ENCODE measurements at regions of chr5 and their contacts with region 1.

Region 1: GRCh38 chr5:132456296-132457001 is 34.1 kb downstream of the IRF1 start:
- DNase-seq: no peak
- H3K4me3 Mint-ChIP-seq: no peak overlapping the region
- H3K27ac Mint-ChIP-seq: peak overlapping the region; percentile 60
- H3K4me1 Mint-ChIP-seq: peaks cover 47% of the 10 kb centered on the region
- H3K27me3 Mint-ChIP-seq: no peaks in the 10 kb centered on the region
- CTCF ChIP-seq: no peak

Region 2: GRCh38 chr5:132362086-132362485 is 94.4 kb before region 1 on chr5:
- CTCF ChIA-PET with region 1: no interaction called
- POLR2A ChIA-PET with region 1: no interaction called
- intact Hi-C with region 1: no loop called
- DNase-seq: peak; percentile 82
- H3K4me3 Mint-ChIP-seq: peak overlapping the region; percentile 10
- H3K27ac Mint-ChIP-seq: peak overlapping the region; percentile 99
- H3K4me1 Mint-ChIP-seq: peaks cover 46% of the 10 kb centered on the region
- H3K27me3 Mint-ChIP-seq: no peaks in the 10 kb centered on the region
- CTCF ChIP-seq: no peak

Region 3: DNA sequence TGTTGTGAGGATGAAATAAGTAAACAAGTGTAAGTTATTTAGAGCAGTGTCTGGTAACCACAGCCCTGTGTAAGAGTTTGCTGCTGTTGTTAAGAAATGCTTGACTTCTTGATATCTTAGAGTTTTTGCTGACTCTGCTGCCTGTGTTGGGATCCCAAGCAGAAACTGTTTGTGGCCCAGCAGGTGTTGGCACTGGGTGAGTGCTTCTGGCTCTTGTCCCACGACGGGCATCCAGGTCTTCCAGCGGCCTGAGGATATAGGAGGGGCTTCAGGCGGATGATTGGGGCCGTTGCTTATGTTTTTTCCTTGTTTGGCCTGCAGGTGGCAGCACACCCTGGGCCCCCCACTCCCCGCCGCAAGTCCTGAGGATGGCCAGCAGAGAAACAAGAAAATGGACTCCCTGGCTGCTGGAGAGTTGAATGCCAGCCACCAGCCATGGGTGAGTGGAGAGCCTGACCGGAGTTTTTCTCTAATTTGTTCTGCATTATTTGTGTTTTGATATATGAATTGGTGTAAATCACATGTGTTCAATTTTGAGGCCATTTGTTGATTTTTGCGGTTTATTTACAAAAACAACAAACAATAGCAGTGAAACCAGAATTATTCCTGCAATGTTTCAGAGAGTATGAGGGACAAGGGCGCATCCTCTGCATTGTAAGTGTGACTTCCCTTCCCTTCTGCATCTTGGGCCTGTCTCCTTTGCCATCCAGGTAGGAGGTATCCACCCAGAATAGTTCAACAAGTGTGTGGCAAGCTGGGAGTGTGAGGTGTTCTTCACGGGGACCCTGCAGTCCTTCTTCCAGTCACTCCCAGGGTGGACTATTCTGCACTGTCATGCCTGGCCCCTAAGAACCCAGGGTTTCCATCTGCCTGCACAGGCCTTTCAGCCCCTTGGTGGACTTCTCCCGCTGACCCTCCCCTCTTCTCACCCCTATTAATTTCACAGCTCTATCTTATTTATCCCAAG is 36.7 kb before region 1 on chr5:
- CTCF ChIA-PET with region 1: interaction called, 3 read pairs
- POLR2A ChIA-PET with region 1: interaction called, 30 read pairs
- intact Hi-C with region 1: loop called (anchors 1 kb)
- DNase-seq: peak; percentile 87
- H3K4me3 Mint-ChIP-seq: no peak overlapping the region
- H3K27ac Mint-ChIP-seq: peak overlapping the region; percentile 17
- H3K4me1 Mint-ChIP-seq: peaks cover 35% of the 10 kb centered on the region
- H3K27me3 Mint-ChIP-seq: no peaks in the 10 kb centered on the region
- CTCF ChIP-seq: peak; percentile 97

Region 4: DNA sequence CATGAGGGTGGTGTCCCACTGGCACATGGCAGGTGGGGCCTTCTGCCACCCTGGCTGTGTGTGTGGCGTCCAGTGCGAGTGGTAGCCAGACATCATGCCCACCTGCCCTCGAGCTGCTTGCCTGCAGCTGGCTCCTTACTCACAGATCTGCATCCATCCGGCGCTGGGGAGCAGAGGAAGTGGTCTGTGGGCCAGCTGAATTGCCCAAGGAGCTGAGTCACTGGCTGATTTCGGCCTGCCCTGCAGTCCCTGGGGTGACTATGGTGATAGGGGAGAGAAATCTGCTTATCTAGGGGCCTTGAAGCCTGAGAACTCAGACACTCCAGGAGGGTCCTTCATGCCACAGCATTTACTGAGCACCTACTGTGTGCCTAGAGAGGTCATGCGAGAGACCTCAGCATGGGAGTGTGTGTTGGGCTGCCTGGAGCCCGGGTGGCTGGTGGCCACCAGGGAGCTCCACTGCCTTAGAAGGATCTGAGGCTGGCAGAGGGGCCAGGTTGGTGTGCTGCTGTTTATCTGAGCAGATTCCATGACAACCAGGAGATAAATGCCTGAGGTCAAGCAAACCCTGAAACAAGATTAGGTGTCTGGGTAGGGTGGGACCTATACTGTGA is 29.8 kb before region 1 on chr5:
- CTCF ChIA-PET with region 1: interaction called, 4 read pairs
- POLR2A ChIA-PET with region 1: interaction called, 30 read pairs
- intact Hi-C with region 1: no loop called
- DNase-seq: peak; percentile 96
- H3K4me3 Mint-ChIP-seq: no peak overlapping the region
- H3K27ac Mint-ChIP-seq: peak overlapping the region; percentile 68
- H3K4me1 Mint-ChIP-seq: peaks cover 47% of the 10 kb centered on the region
- H3K27me3 Mint-ChIP-seq: no peaks in the 10 kb centered on the region
- CTCF ChIP-seq: peak; percentile 22

Region 5: GRCh38 chr5:132437604-132438266 is 18.7 kb before region 1 on chr5:
- CTCF ChIA-PET with region 1: interaction called, 3 read pairs
- POLR2A ChIA-PET with region 1: interaction called, 14 read pairs
- intact Hi-C with region 1: no loop called
- DNase-seq: peak; percentile 57
- H3K4me3 Mint-ChIP-seq: no peak overlapping the region
- H3K27ac Mint-ChIP-seq: no peak overlapping the region
- H3K4me1 Mint-ChIP-seq: peaks cover 20% of the 10 kb centered on the region
- H3K27me3 Mint-ChIP-seq: no peaks in the 10 kb centered on the region
- CTCF ChIP-seq: no peak

Region 6: DNA sequence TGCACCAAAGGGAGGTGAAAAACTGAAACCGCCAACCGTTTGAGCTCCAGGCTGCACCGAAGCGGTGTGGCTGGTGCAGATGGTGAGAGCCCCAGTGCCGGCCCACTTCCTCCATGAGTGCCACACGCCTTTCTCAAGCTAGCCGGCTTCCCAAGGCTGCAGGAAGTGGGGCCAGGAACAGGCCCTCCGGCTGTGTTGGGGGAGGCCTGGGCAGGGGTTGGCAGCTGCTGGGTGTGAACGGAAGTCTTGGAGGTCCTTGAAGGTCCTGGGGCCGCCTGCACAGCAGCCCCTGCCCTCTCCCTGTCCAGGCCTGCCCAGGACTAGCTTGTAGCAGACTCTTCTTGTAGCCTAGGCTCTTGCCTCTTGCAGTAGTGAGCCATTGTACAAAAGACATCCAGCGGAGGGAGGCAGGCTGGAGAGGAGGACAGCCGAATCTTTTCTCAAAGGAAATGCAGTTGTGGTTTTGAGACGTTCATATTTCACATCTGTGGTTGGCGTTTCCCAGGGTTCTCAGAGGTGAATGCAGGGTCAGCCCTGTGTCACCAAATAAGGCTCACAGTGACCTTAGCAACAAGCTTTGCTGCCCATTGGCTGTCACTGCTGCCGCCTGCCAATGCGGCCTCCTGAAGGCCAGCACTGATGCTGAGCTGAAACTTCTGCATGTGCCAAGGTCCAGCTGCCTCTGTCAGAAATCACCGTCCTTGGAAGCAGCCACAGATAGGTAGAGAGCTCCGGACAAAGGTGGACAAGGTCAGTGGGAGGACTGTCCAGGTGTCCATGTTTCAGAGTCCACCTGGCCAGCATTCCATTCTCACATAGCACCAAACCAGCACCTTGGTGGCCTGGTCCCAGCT is 10.2 kb after region 1 on chr5:
- CTCF ChIA-PET with region 1: interaction called, 20 read pairs
- POLR2A ChIA-PET with region 1: interaction called, 9 read pairs
- intact Hi-C with region 1: no loop called
- DNase-seq: no peak
- H3K4me3 Mint-ChIP-seq: no peak overlapping the region
- H3K27ac Mint-ChIP-seq: no peak overlapping the region
- H3K4me1 Mint-ChIP-seq: peaks cover 18% of the 10 kb centered on the region
- H3K27me3 Mint-ChIP-seq: no peaks in the 10 kb centered on the region
- CTCF ChIP-seq: no peak

Region 7: GRCh38 chr5:132695956-132696355 is 239.5 kb after region 1 on chr5:
- CTCF ChIA-PET with region 1: no interaction called
- POLR2A ChIA-PET with region 1: no interaction called
- intact Hi-C with region 1: no loop called
- DNase-seq: no peak
- H3K4me3 Mint-ChIP-seq: no peak overlapping the region
- H3K27ac Mint-ChIP-seq: no peak overlapping the region
- H3K4me1 Mint-ChIP-seq: peaks cover 6% of the 10 kb centered on the region
- H3K27me3 Mint-ChIP-seq: no peaks in the 10 kb centered on the region
- CTCF ChIP-seq: no peak

Measured in MCF 10A (cell line).